ENCODE measurements at regions of chr6 and their contacts with region 1.

Region 1: GRCh38 chr6:111011360-111012142 is 29.7 kb downstream of the RPF2 start:
- DNase-seq: peak; percentile 19
- ATAC-seq: peak; percentile 88
- H3K4me3 ChIP-seq: no peak overlapping the region
- H3K27ac ChIP-seq: no peak overlapping the region
- H3K4me1 ChIP-seq: no peaks in the 10 kb centered on the region
- H3K27me3 ChIP-seq: no peaks in the 10 kb centered on the region
- CTCF ChIP-seq: peak; percentile 56 to 84 (median 60)
- POLR2A ChIP-seq: no peak
- RAD21 ChIP-seq: peak; percentile 74

Region 2: GRCh38 chr6:111027219-111027618 is 15.7 kb after region 1 on chr6:
- CTCF ChIA-PET with region 1: interaction called, 15 read pairs
- POLR2A ChIA-PET with region 1: no interaction called
- RAD21 ChIA-PET with region 1: no interaction called
- intact Hi-C with region 1: no loop called
- DNase-seq: no peak
- ATAC-seq: peak; percentile 63
- H3K4me3 ChIP-seq: no peak overlapping the region
- H3K27ac ChIP-seq: no peak overlapping the region
- H3K4me1 ChIP-seq: no peaks in the 10 kb centered on the region
- H3K27me3 ChIP-seq: no peaks in the 10 kb centered on the region
- CTCF ChIP-seq: peak in 2 of 3 experiments; percentile 27 to 35; a peak in 2 of 6 replicates
- POLR2A ChIP-seq: no peak
- RAD21 ChIP-seq: peak; percentile 45

Region 3: DNA sequence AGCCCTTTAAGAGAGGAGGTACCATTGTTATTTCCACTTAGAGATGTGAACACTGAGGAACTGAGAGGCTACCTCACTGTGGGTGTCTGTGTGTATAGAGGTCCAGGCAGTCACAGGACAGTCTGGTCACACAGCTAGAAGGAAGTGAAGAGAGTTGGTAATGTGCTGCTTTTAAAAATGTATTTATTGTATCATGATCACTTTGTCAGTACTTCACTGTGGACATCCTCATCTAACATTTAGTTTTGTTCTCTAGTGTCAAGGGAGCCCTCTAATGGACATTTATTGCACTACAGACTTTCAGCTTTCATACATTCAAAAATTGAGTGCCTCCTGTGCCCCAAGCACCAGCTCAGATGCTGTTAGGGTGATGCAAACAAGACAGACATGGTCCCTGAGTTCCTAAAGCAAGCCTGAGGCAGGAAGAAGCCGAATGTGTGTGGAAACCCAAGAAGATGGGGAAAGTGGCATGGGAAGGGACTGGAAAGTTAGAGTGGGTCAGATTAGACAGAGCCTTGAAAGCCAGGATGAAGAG is 198.7 kb after region 1 on chr6:
- CTCF ChIA-PET with region 1: interaction called, 28 read pairs
- POLR2A ChIA-PET with region 1: no interaction called
- RAD21 ChIA-PET with region 1: no interaction called
- intact Hi-C with region 1: loop called (anchors 1 kb)
- DNase-seq: peak; percentile 45
- ATAC-seq: peak; percentile 85
- H3K4me3 ChIP-seq: no peak overlapping the region
- H3K27ac ChIP-seq: no peak overlapping the region
- H3K4me1 ChIP-seq: no peaks in the 10 kb centered on the region
- H3K27me3 ChIP-seq: no peaks in the 10 kb centered on the region
- CTCF ChIP-seq: peak; percentile 62 to 78 (median 75); a peak in 5 of 6 replicates
- POLR2A ChIP-seq: no peak
- RAD21 ChIP-seq: peak; percentile 86

Region 4: GRCh38 chr6:111259089-111259831 is 247.7 kb after region 1 on chr6:
- CTCF ChIA-PET with region 1: interaction called, 6 read pairs
- POLR2A ChIA-PET with region 1: no interaction called
- RAD21 ChIA-PET with region 1: no interaction called
- intact Hi-C with region 1: loop called (anchors 5 kb)
- DNase-seq: peak; percentile 98
- ATAC-seq: peak; percentile 96
- H3K4me3 ChIP-seq: peak overlapping the region; percentile 72 to 82
- H3K27ac ChIP-seq: peak overlapping the region; percentile 61
- H3K4me1 ChIP-seq: peaks cover 14 to 43% of the 10 kb centered on the region in 2 experiments
- H3K27me3 ChIP-seq: no peaks in the 10 kb centered on the region
- CTCF ChIP-seq: peak; percentile 91 to 96 (median 93)
- POLR2A ChIP-seq: peak; percentile 74
- RAD21 ChIP-seq: peak; percentile 97